ENCODE measurements at regions of chrX and their contacts with region 1.

Region 1: GRCh38 chrX:101931488-101932248 is at the start of gene ZMAT1:
- DNase-seq: peak; percentile 84 to 96 (median 92)
- ATAC-seq: peak; percentile 84
- H3K4me3 ChIP-seq: peak within 1 kb of the TSS; percentile 63
- H3K4me3 Mint-ChIP-seq: peak within 1 kb of the TSS; percentile 90
- H3K27ac ChIP-seq: peak within 1 kb of the TSS; percentile 69 to 82
- H3K27ac Mint-ChIP-seq: peak within 1 kb of the TSS; percentile 90
- H3K4me1 ChIP-seq: peaks cover 9% of the 10 kb centered on the region
- H3K4me1 Mint-ChIP-seq: peaks cover 17% of the 10 kb centered on the region
- H3K27me3 ChIP-seq: no peaks in the 10 kb centered on the region
- H3K27me3 Mint-ChIP-seq: no peaks in the 10 kb centered on the region
- CTCF ChIP-seq: no peak
- total RNA-seq, gene ZMAT1: 19.2 to 20.2 TPM

Region 2: DNA sequence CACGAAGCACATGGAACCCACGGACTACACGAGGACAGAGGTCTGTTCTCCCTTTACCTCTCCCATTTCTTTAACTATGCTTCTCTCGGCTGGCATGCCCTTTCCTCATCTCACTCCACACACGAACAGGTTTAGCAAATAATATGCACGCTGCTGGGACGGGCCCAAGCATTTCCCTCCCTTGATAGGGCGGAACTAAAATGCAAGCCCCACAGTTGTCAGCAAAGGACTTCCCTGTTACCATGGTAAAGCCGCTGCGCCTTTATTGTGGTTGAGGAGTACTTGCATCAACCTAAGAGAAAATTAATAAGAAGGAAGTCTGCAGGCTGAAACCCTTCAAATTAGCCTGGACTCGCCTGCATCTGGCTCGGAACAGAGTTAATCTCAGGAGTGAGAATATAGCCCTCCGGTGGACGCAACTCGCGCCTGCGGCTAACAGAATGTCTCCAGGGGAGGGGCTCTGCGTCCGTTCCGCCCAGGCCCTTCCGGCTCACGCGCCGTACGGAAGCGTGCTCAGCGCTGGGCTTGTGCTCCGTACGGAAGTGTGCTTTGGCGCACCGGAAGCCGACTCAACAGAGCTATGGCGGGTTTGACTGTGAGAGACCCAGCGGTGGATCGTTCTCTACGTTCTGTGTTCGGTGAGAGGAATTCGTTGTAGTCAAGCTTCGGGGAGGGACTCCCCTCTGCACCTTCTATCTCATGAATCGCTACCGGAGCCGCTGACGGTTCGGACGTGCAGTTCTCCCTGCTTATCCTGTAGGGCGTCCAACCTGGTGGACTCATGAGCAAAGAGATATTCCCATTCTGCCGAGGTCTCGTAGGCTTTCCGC is 1111.6 kb before region 1 on chrX and contains the start of gene CSTF2:
- CTCF ChIA-PET with region 1: no interaction called
- POLR2A ChIA-PET with region 1: no interaction called
- intact Hi-C with region 1: loop called in 1 of 2 experiments (anchors 2 kb)
- DNase-seq: peak; percentile 62 to 91 (median 72)
- ATAC-seq: peak; percentile 93
- H3K4me3 ChIP-seq: peak within 1 kb of the TSS; percentile 88
- H3K4me3 Mint-ChIP-seq: peak within 1 kb of the TSS; percentile 87
- H3K27ac ChIP-seq: peak within 1 kb of the TSS; percentile 77 to 80
- H3K27ac Mint-ChIP-seq: peak within 1 kb of the TSS; percentile 84
- H3K4me1 ChIP-seq: peaks cover 8% of the 10 kb centered on the region
- H3K4me1 Mint-ChIP-seq: peaks cover 11% of the 10 kb centered on the region
- H3K27me3 ChIP-seq: no peaks in the 10 kb centered on the region
- H3K27me3 Mint-ChIP-seq: peaks cover 19% of the 10 kb centered on the region
- CTCF ChIP-seq: no peak
- total RNA-seq, gene CSTF2: 8.3 to 10.1 TPM

Region 3: GRCh38 chrX:101399825-101400224 is 531.8 kb before region 1 on chrX:
- CTCF ChIA-PET with region 1: no interaction called
- POLR2A ChIA-PET with region 1: interaction called, 3 read pairs
- intact Hi-C with region 1: loop called in 1 of 2 experiments (anchors 5 kb)
- DNase-seq: no peak
- ATAC-seq: no peak
- H3K4me3 ChIP-seq: no peak overlapping the region
- H3K4me3 Mint-ChIP-seq: no peak overlapping the region
- H3K27ac ChIP-seq: no peak overlapping the region
- H3K27ac Mint-ChIP-seq: no peak overlapping the region
- H3K4me1 ChIP-seq: no peaks in the 10 kb centered on the region
- H3K4me1 Mint-ChIP-seq: no peaks in the 10 kb centered on the region
- H3K27me3 ChIP-seq: no peaks in the 10 kb centered on the region
- H3K27me3 Mint-ChIP-seq: no peaks in the 10 kb centered on the region
- CTCF ChIP-seq: no peak

Region 4: DNA sequence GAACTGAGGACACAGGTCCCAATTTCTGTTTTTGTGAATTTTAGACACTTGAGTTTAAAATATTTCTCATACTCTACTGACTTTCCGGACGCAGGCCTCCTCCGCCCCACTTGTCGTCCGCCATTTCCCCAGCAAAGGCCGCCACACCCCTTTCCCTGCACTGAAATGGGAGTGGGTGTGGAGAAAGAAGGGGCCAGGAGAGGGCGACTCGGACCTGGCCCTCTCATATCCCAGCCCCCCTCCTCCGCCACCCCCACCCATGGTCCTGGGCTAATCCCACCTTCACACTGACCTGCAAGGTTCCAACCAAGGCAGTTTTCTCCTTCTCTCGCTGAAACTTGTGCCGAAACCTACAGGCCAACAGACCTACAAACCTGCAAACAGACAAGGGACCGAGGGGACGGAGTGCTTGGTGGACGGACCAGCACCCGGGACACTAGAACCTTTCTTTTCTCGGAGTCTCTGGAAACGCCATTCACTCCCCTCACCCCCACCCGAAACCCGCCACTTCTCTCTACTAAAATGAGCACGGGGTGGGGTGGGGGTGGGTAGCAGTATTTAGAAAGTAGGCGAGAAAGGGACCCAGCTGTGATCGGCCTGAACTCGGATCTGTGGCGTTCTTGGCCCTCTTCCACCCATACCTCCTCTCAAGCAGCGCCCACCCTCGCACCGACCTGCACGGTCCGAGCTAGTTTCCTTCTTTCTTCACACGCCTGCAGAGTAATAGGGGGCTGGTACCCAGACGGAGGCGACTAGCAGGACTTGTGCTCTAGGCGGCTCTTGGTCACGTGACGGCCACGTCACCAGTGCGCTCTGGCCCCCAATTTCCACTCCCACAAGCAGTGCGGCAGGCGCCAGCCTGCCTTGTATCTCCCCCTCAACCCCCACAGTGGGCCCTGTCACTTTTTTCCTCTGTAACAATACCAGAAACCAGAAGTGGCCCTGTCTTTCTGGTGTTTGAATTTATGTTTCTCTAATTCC is 314.2 kb before region 1 on chrX and contains the start of gene ARMCX6:
- CTCF ChIA-PET with region 1: no interaction called
- POLR2A ChIA-PET with region 1: interaction called, 5 read pairs
- intact Hi-C with region 1: loop called in 1 of 2 experiments (anchors 5 kb)
- DNase-seq: peak; percentile 45 to 89 (median 60)
- ATAC-seq: peak; percentile 86
- H3K4me3 ChIP-seq: peak within 1 kb of the TSS; percentile 77
- H3K4me3 Mint-ChIP-seq: peak within 1 kb of the TSS; percentile 97
- H3K27ac ChIP-seq: peak within 1 kb of the TSS; percentile 34 to 41
- H3K27ac Mint-ChIP-seq: peak within 1 kb of the TSS; percentile 92
- H3K4me1 ChIP-seq: peaks cover 14% of the 10 kb centered on the region
- H3K4me1 Mint-ChIP-seq: peaks cover 21% of the 10 kb centered on the region
- H3K27me3 ChIP-seq: no peaks in the 10 kb centered on the region
- H3K27me3 Mint-ChIP-seq: no peaks in the 10 kb centered on the region
- CTCF ChIP-seq: no peak
- total RNA-seq, gene ARMCX6: 35.0 to 39.5 TPM

Region 5: DNA sequence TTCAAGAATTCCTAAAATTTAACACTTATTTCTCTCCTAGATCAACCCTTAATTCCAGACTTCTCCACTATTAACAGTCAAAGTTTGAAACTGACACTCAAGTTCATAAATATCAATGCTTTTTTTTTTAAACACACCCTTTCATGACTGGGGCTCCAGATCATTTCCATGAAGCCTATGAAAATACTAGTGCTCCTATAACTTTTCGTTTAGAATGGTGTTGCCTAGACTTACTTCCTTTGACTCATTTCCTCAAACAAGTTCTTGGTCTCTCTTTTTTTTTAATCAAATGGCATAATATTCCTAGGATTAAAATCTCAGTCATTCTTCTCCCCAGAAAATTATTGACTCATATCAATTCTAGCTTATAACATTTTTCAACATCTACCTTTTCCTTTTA is 12.9 kb before region 1 on chrX:
- CTCF ChIA-PET with region 1: interaction called, 4 read pairs
- POLR2A ChIA-PET with region 1: interaction called, 15 read pairs
- intact Hi-C with region 1: no loop called
- DNase-seq: no peak
- ATAC-seq: no peak
- H3K4me3 ChIP-seq: no peak overlapping the region
- H3K4me3 Mint-ChIP-seq: no peak overlapping the region
- H3K27ac ChIP-seq: no peak overlapping the region
- H3K27ac Mint-ChIP-seq: no peak overlapping the region
- H3K4me1 ChIP-seq: no peaks in the 10 kb centered on the region
- H3K4me1 Mint-ChIP-seq: peaks cover 4% of the 10 kb centered on the region
- H3K27me3 ChIP-seq: no peaks in the 10 kb centered on the region
- H3K27me3 Mint-ChIP-seq: no peaks in the 10 kb centered on the region
- CTCF ChIP-seq: no peak

Region 6: GRCh38 chrX:101986586-101986985 is 54.9 kb after region 1 on chrX:
- CTCF ChIA-PET with region 1: no interaction called
- POLR2A ChIA-PET with region 1: no interaction called
- intact Hi-C with region 1: no loop called
- DNase-seq: no peak
- ATAC-seq: no peak
- H3K4me3 ChIP-seq: no peak overlapping the region
- H3K4me3 Mint-ChIP-seq: no peak overlapping the region
- H3K27ac ChIP-seq: no peak overlapping the region
- H3K27ac Mint-ChIP-seq: no peak overlapping the region
- H3K4me1 ChIP-seq: no peaks in the 10 kb centered on the region
- H3K4me1 Mint-ChIP-seq: no peaks in the 10 kb centered on the region
- H3K27me3 ChIP-seq: no peaks in the 10 kb centered on the region
- H3K27me3 Mint-ChIP-seq: no peaks in the 10 kb centered on the region
- CTCF ChIP-seq: no peak

Region 7: DNA sequence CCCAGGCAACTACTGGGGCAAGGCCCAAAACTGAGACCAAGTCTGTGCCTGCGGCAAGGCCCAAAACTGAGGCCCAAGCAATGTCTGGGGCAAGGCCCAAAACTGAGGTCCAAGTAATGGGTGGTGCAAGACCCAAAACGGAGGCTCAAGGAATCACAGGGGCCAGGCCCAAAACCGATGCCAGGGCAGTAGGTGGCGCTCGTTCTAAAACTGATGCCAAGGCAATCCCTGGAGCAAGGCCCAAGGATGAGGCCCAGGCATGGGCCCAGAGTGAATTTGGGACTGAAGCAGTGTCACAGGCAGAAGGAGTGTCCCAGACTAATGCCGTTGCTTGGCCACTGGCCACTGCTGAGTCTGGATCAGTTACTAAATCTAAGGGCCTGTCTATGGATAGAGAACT is 783.3 kb after region 1 on chrX:
- CTCF ChIA-PET with region 1: no interaction called
- POLR2A ChIA-PET with region 1: no interaction called
- intact Hi-C with region 1: loop called in 1 of 2 experiments (anchors 5 kb)
- DNase-seq: no peak
- ATAC-seq: no peak
- H3K4me3 ChIP-seq: no peak overlapping the region
- H3K4me3 Mint-ChIP-seq: no peak overlapping the region
- H3K27ac ChIP-seq: no peak overlapping the region
- H3K27ac Mint-ChIP-seq: no peak overlapping the region
- H3K4me1 ChIP-seq: peaks cover 14% of the 10 kb centered on the region
- H3K4me1 Mint-ChIP-seq: peaks cover 15% of the 10 kb centered on the region
- H3K27me3 ChIP-seq: peaks cover 0 to 5% of the 10 kb centered on the region in 2 experiments
- H3K27me3 Mint-ChIP-seq: peaks cover 11% of the 10 kb centered on the region
- CTCF ChIP-seq: no peak

Region 8: GRCh38 chrX:103310542-103311398 is 1379.1 kb after region 1 on chrX and contains the start of gene BEX2:
- CTCF ChIA-PET with region 1: no interaction called
- POLR2A ChIA-PET with region 1: no interaction called
- intact Hi-C with region 1: loop called in 1 of 2 experiments (anchors 10 kb)
- DNase-seq: peak; percentile 71 to 92 (median 82)
- ATAC-seq: peak; percentile 99
- H3K4me3 ChIP-seq: peak within 1 kb of the TSS; percentile 63
- H3K4me3 Mint-ChIP-seq: peak within 1 kb of the TSS; percentile 89
- H3K27ac ChIP-seq: peak within 1 kb of the TSS in 1 of 2 donors; percentile 59
- H3K27ac Mint-ChIP-seq: peak within 1 kb of the TSS; percentile 71
- H3K4me1 ChIP-seq: peaks cover 9% of the 10 kb centered on the region
- H3K4me1 Mint-ChIP-seq: no peaks in the 10 kb centered on the region
- H3K27me3 ChIP-seq: no peaks in the 10 kb centered on the region
- H3K27me3 Mint-ChIP-seq: no peaks in the 10 kb centered on the region
- CTCF ChIP-seq: no peak
- total RNA-seq, gene BEX2: 46.4 to 49.3 TPM